ENCODE measurements at regions of chr19 and their contacts with region 1.

Region 1: DNA sequence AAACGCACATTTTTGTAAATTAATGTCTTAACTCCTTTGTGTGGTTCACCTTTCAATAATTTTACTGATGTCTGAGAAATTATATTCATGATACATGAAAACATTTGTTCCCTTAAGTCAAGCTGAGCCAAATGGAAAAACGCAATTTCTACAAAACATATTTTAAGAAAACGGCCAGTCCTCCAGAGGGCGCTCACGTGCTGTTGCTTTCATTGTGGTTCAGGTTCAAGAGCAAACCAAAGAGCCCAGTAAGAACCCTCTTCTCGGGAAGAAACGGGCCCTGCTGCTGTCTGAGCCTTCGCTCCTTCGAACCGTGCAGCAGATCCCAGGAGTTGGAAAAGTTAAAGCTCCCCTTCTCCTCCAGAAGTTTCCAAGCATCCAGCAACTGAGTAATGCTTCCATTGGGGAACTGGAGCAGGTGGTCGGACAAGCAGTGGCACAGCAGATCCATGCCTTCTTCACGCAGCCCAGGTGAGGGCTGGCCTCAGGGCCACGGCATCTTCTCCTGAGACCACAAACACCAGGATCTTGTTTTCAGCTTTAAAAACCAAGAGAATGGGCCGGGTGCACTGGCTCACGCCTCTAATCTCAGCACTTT is 4.3 kb downstream of the FAAP24 start:
- DNase-seq: peak; percentile 79
- ATAC-seq: no peak
- H3K4me3 Mint-ChIP-seq: no peak overlapping the region
- H3K27ac Mint-ChIP-seq: peak overlapping the region; percentile 74; the same call in 1 of the 2 replicates
- H3K4me1 Mint-ChIP-seq: no peaks in the 10 kb centered on the region
- H3K27me3 Mint-ChIP-seq: no peaks in the 10 kb centered on the region; the same call in 1 of the 2 replicates
- CTCF ChIP-seq: peak; percentile 84

Region 2: DNA sequence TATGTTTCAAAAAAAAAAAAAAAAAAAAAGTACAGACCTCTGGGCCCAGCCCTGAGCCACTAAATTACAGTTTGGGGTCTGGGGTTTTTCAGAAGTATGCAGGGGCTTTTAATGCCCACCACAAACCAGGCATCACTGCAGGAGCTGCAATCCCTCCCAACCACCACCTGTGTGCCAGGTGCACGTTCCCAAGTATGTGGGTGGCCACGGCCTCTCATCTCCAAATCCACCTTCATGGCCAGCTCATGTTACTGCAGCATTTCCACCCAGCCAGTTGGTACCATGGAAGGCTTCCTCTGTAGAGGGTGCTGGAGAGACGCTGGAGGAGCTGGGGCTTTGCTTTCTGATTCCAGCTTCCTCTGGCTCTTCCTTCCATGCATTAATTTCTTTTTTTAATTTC is 31.0 kb before region 1 on chr19:
- CTCF ChIA-PET with region 1: no interaction called
- POLR2A ChIA-PET with region 1: no interaction called
- DNase-seq: no peak
- ATAC-seq: peak; percentile 46; the same call in 1 of the 2 replicates
- H3K4me3 Mint-ChIP-seq: no peak overlapping the region
- H3K27ac Mint-ChIP-seq: no peak overlapping the region
- H3K4me1 Mint-ChIP-seq: no peaks in the 10 kb centered on the region
- H3K27me3 Mint-ChIP-seq: no peaks in the 10 kb centered on the region
- CTCF ChIP-seq: no peak

Region 3: DNA sequence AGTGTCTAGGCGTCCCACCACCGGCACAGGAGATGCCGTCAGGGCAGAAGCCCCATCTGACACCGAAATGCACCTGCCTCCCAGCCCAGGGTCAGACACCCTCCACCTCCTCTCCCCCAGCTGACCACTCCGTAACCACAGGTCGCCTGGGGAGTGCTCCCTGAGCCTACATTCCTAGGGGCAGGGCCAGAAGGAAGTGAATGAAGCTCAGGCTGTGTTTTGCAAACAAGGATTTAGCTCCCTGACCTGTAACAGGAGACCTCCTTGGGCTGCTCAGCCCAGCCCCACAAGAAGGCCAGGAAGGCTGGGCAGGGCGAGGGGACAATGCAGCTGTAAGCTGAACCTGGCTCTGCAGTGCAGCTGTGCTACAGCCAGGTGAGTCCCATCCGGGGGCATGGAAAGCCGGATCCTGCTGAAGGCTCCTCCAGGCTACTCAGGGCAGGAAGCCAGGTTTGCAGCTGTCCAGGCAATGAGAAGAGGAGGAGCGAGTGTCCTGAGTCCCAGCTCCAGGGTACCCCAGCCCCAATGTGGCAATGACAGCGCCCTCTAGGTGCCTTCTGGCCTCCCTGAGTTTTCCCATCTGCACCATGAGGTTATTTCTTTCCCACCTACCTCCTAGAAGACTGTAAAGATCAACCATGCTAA is 46.3 kb after region 1 on chr19:
- CTCF ChIA-PET with region 1: interaction called, 10 read pairs
- POLR2A ChIA-PET with region 1: interaction called, 3 read pairs
- DNase-seq: peak; percentile 76
- ATAC-seq: peak; percentile 96
- H3K4me3 Mint-ChIP-seq: peak overlapping the region; percentile 54
- H3K27ac Mint-ChIP-seq: peak overlapping the region; percentile 98
- H3K4me1 Mint-ChIP-seq: peaks cover 29% of the 10 kb centered on the region
- H3K27me3 Mint-ChIP-seq: no peaks in the 10 kb centered on the region
- CTCF ChIP-seq: 0 out of 2 replicates have a peak, but pooled peaks have one; percentile 19

Region 4: GRCh38 chr19:33125929-33126388 is 149.7 kb after region 1 on chr19:
- CTCF ChIA-PET with region 1: interaction called, 10 read pairs
- POLR2A ChIA-PET with region 1: no interaction called
- DNase-seq: peak; percentile 45
- ATAC-seq: peak; percentile 69
- H3K4me3 Mint-ChIP-seq: no peak overlapping the region
- H3K27ac Mint-ChIP-seq: no peak overlapping the region
- H3K4me1 Mint-ChIP-seq: no peaks in the 10 kb centered on the region
- H3K27me3 Mint-ChIP-seq: no peaks in the 10 kb centered on the region; the same call in 1 of the 2 replicates
- CTCF ChIP-seq: peak; percentile 71

Measured in WTC11 (cell line).